A549 (cell line): ENCODE measurements at regions of chr9 and their contacts with region 1.

Region 1: GRCh38 chr9:130770679-130771442 is 64.2 kb upstream of the ABL1 start:
- DNase-seq: peak; percentile 71 to 72
- ATAC-seq: peak; percentile 90 to 98
- H3K4me3 ChIP-seq: no peak overlapping the region
- H3K27ac ChIP-seq: no peak overlapping the region
- H3K4me1 ChIP-seq: 0 out of 3 replicates have a peak, but pooled peaks cover 6% of the 10 kb centered on the region
- CTCF ChIP-seq: peak; percentile 87
- EP300 ChIP-seq: no peak
- POLR2A ChIP-seq: no peak
- RAD21 ChIP-seq: peak; percentile 86 to 89

Region 2: DNA sequence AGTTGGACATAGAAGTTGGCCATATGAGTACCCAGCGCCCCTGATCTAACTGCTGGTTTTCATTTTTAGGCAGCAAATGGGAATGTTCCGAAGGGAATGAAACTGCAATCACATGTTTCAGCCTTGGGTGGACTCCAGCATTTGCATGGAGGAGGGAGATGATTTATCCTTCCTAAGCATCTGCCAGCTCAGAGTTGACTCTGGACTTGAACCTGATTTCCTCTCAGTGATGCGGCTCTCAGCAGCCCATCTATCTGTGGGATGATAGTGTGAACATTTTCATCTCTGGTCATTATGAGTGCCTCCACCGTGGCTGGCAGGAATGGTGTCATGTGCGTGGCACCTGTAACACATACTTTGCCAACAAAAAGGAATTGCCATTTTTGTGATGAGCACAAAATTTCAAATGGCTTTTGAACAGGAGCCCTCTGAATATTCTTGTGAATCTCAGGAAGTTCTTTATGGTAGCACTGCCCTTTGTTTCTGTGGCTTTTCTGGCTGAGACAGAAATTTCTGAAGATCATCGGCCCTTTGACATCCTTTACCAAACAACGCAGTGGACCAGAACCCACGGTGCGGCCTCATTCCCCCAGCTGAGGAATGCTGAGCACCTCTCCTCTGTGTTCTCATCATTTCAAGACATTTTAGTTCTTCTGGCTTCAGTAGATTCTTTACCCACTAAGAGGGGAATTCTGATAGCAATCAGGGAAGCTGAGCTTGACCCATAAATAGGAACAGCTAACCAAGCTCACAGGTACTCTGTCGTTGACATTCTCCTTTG is 163.0 kb before region 1 on chr9:
- CTCF ChIA-PET with region 1: no interaction called
- POLR2A ChIA-PET with region 1: no interaction called
- DNase-seq: no peak
- ATAC-seq: no peak
- H3K4me3 ChIP-seq: no peak overlapping the region
- H3K27ac ChIP-seq: no peak overlapping the region
- H3K4me1 ChIP-seq: no peaks in the 10 kb centered on the region
- CTCF ChIP-seq: no peak
- EP300 ChIP-seq: no peak
- POLR2A ChIP-seq: no peak
- RAD21 ChIP-seq: no peak

Region 3: DNA sequence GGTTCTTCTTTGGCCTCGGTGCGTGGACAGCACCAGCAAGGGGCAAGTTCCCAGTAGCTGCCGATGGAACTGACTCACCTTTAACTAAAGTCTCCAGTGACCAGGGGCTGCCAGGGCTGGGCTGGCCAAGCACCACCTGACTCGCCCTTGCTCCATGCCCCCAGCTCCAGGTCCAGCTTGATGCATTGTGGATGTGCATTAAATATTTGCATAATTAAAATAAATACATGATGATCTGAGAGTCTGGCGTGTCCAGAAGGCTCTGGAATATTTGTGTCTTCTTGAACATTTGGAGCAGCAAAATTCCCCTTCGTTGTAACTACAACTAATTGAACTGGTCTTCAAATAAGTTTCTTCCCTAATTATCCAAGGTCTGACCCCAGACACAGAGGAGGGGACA is 116.0 kb before region 1 on chr9:
- CTCF ChIA-PET with region 1: no interaction called
- POLR2A ChIA-PET with region 1: no interaction called
- DNase-seq: no peak
- ATAC-seq: no peak
- H3K4me3 ChIP-seq: no peak overlapping the region
- H3K27ac ChIP-seq: no peak overlapping the region
- H3K4me1 ChIP-seq: peaks cover 2% of the 10 kb centered on the region; the same call in 2 of the 3 replicates
- CTCF ChIP-seq: no peak
- EP300 ChIP-seq: no peak
- POLR2A ChIP-seq: no peak
- RAD21 ChIP-seq: no peak

Region 4: GRCh38 chr9:130707225-130707976 is 63.5 kb before region 1 on chr9:
- CTCF ChIA-PET with region 1: interaction called, 20 read pairs
- POLR2A ChIA-PET with region 1: no interaction called
- DNase-seq: peak; percentile 33 to 68
- ATAC-seq: peak; percentile 80 to 85
- H3K4me3 ChIP-seq: no peak overlapping the region
- H3K27ac ChIP-seq: no peak overlapping the region
- H3K4me1 ChIP-seq: peaks cover 11% of the 10 kb centered on the region; the same call in 1 of the 3 replicates
- CTCF ChIP-seq: peak; percentile 95
- EP300 ChIP-seq: no peak
- POLR2A ChIP-seq: no peak
- RAD21 ChIP-seq: peak; percentile 76

Region 5: GRCh38 chr9:130756037-130756436 is 14.8 kb before region 1 on chr9:
- CTCF ChIA-PET with region 1: interaction called, 25 read pairs
- POLR2A ChIA-PET with region 1: no interaction called
- DNase-seq: no peak
- ATAC-seq: no peak
- H3K4me3 ChIP-seq: no peak overlapping the region
- H3K27ac ChIP-seq: no peak overlapping the region
- H3K4me1 ChIP-seq: no peaks in the 10 kb centered on the region
- CTCF ChIP-seq: no peak
- EP300 ChIP-seq: no peak
- POLR2A ChIP-seq: no peak
- RAD21 ChIP-seq: no peak

Region 6: GRCh38 chr9:130785940-130786508 is 15.2 kb after region 1 on chr9:
- CTCF ChIA-PET with region 1: interaction called, 23 read pairs
- POLR2A ChIA-PET with region 1: no interaction called
- DNase-seq: no peak
- ATAC-seq: no peak
- H3K4me3 ChIP-seq: no peak overlapping the region
- H3K27ac ChIP-seq: peak overlapping the region in 1 of 2 experiments; percentile 12; a peak in 1 of 6 replicates
- H3K4me1 ChIP-seq: peaks cover 24% of the 10 kb centered on the region
- CTCF ChIP-seq: no peak
- EP300 ChIP-seq: no peak
- POLR2A ChIP-seq: no peak
- RAD21 ChIP-seq: no peak

Region 7: DNA sequence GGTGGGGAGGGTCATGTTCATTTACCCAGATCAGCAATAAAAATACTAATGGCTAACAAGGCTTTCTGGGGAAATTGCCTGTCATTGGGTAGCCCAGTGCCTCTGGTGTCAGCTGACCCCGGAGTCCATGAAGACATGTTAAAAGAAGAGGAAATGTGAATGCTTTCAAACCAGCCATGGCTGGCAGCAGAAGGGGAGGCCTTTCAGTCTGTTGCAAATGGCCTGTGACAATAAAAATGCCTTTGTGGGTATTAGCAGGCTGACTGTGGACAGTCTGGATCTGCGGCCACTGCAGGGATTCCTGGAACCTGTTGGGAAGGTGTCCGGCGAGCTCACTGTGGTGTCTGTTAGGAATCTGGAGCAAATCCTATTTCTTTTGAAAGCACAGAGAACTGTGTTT is 71.7 kb after region 1 on chr9:
- CTCF ChIA-PET with region 1: interaction called, 12 read pairs
- POLR2A ChIA-PET with region 1: no interaction called
- DNase-seq: no peak
- ATAC-seq: no peak
- H3K4me3 ChIP-seq: no peak overlapping the region
- H3K27ac ChIP-seq: peak overlapping the region in 1 of 2 experiments; percentile 91; a peak in 2 of 6 replicates
- H3K4me1 ChIP-seq: peaks cover 80% of the 10 kb centered on the region
- CTCF ChIP-seq: no peak
- EP300 ChIP-seq: no peak
- POLR2A ChIP-seq: no peak
- RAD21 ChIP-seq: no peak

Region 8: DNA sequence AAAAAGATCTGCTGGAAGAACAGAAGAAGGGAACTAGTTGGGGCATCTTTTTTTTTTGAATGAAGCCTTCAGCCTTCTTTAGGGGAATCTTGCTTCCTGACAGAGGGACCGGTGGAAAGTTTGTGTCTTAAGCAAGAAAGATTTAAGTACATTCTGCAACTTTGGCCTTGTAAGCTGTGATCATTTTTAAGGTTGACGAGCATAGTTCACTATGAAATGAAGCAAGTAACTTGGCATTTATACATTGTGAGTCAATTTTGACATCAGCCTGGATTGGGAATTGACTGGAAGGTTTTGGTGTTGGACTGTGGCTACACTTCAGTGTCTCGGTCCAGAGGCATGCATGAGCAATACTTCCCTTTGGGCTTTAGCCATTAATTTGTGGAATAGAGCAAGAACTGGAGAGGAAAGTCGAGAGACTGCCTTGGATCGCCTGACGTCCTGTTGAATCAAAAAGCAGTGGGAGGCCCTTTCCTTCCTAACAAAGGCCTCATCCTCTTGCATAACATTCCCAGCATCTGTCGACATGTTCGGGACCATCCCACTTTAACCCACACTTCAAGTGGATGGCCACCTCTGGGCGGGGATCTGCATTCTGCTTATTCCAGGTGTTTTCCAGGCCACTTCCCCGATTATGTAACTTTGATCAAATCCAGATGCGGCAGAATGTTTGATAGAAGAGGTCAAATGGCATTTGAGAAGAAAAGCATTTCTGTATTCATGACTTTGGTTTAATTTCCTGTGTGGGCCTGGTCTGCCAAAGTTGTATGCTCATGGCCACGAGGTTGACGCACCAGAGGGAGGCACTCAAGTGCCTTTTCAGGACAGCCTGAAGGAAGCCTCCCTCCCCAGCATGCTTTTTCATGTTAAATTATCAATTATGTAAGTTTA is 76.7 kb after region 1 on chr9:
- CTCF ChIA-PET with region 1: interaction called, 17 read pairs
- POLR2A ChIA-PET with region 1: no interaction called
- DNase-seq: peak; percentile 87 to 90
- ATAC-seq: peak; percentile 79 to 81
- H3K4me3 ChIP-seq: peak overlapping the region; percentile 35; the same call in 2 of the 3 replicates
- H3K27ac ChIP-seq: peak overlapping the region; percentile 91 to 93
- H3K4me1 ChIP-seq: peaks cover 72% of the 10 kb centered on the region
- CTCF ChIP-seq: peak; percentile 19; the same call in 1 of the 3 replicates
- EP300 ChIP-seq: peak; percentile 50 to 74; a peak in 3 of 5 replicates
- POLR2A ChIP-seq: no peak
- RAD21 ChIP-seq: 0 out of 5 replicates have a peak, but pooled peaks of 1 of the 2 experiments have one; percentile 6

Region 9: DNA sequence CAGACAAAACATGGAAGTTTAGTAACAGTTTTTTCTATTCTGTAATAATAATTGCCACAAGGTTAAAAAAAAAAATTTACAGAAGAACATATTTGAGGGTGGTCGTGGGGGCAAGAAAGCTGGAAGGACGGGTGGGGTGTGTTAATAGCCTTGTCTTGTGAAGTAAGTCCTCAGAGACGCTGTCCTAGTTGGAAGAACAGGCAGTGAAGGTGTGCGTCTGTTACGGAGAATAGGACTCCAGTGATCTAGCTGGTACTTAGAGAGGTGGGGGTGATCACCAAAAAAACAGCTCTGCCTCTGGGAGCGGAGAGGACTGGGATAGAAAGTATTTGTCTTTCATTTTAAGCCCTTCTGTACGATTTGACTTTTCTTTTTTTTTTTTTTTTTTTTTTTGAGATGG is 81.9 kb after region 1 on chr9:
- CTCF ChIA-PET with region 1: interaction called, 454 read pairs
- POLR2A ChIA-PET with region 1: no interaction called
- DNase-seq: no peak
- ATAC-seq: no peak
- H3K4me3 ChIP-seq: no peak overlapping the region
- H3K27ac ChIP-seq: no peak overlapping the region
- H3K4me1 ChIP-seq: peaks cover 34% of the 10 kb centered on the region
- CTCF ChIP-seq: no peak
- EP300 ChIP-seq: no peak
- POLR2A ChIP-seq: no peak
- RAD21 ChIP-seq: no peak